Upper lobe of right lung (tissue), 1 donor: ENCODE measurements at regions of chr7 and their contacts with region 1.

Region 1: GRCh38 chr7:27199849-27200760 is at the start of gene HOXA13:
- DNase-seq: peak; percentile 57
- ATAC-seq: peak; percentile 30
- H3K4me3 ChIP-seq: peak within 1 kb of the TSS; percentile 25
- H3K27ac ChIP-seq: no peak within 1 kb of the TSS
- H3K4me1 ChIP-seq: peaks cover 18% of the 10 kb centered on the region
- H3K27me3 ChIP-seq: peaks cover 96% of the 10 kb centered on the region
- CTCF ChIP-seq: no peak
- total RNA-seq, gene HOXA13: not detected

Region 2: GRCh38 chr7:27576360-27576944 is 376.3 kb after region 1 on chr7:
- intact Hi-C with region 1: loop called (anchors 10 kb)
- DNase-seq: no peak
- ATAC-seq: peak; percentile 56
- H3K4me3 ChIP-seq: no peak overlapping the region
- H3K27ac ChIP-seq: no peak overlapping the region
- H3K4me1 ChIP-seq: no peaks in the 10 kb centered on the region
- H3K27me3 ChIP-seq: no peaks in the 10 kb centered on the region
- CTCF ChIP-seq: peak; percentile 72

Region 3: DNA sequence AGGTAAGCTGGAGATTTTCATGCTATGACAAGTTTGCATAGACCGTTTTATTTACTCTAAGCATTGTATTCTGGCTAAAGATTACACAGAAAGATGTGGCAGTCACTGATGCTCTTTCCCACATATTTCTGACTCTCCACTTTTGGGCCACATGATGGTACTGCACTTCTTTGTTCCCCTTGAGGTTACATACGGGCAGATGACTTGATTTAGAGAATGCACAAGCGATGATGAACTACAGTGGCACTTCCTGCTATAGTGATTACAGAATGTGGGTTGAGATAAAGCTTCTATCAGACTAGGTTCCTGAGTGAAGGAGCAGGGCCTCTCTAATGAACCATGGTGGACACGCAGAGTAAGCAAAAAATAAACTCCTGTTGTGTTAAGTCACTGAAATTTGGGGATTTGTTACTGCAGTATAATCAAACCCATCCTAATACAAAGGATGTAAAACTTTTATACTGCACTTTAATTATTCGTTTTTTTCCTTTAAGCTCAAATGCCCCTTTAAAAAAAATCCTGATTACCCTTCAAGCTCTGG is 717.7 kb after region 1 on chr7:
- intact Hi-C with region 1: loop called (anchors 10 kb)
- DNase-seq: no peak
- ATAC-seq: peak; percentile 59
- H3K4me3 ChIP-seq: no peak overlapping the region
- H3K27ac ChIP-seq: no peak overlapping the region
- H3K4me1 ChIP-seq: no peaks in the 10 kb centered on the region
- H3K27me3 ChIP-seq: no peaks in the 10 kb centered on the region
- CTCF ChIP-seq: no peak